Transverse colon (tissue), 4 donors: ENCODE measurements at regions of chr19 and their contacts with region 1.

Region 1: DNA sequence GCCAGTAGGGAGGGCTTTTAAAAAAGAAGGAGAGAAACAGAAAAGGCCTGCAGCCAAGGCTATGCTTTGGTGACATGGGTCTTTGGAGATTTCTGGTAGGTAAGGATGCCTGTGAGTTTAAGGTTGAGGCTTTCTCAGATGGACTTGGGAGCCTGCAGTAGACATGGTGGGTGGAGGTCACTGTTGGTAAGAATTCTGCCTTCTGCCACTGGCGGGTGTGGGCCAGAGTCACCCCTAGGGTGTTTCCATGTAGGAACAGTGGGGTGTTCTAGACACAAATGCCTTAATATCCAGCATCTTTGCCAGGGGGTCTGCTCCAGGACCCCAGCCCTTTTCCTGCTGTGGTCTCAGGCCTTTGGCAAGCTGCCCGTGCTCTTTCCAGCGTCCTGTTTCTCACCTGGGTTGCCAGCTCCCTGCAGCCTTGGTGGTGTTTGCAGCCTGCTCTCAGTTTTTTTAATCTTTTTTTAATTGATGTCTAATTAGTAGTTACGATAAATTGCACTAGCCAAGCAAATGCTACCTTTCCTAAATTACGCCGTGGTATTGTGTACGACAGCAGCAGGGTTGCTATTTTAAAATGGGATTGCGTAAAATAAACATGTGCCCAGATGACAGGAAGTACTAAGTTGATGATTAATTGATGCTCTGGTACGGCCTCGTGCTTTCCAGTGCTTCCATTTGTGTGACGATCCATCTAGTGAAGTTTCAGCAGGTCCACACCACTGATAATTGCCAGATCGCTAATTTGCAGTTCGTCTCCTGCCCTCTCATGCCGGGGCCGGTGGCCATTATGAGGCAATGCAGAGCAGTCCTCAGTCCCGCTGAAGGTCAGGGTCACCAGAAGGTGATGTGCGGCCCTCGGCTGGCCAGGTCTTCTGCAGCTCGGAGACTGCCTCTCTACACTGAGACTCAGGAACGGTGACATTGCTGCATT is 35.3 kb upstream of the NPAS1 start:
- DNase-seq: no peak
- H3K4me3 ChIP-seq: no peak overlapping the region
- H3K27ac ChIP-seq: peak overlapping the region in 1 of 4 donors; percentile 0
- H3K4me1 ChIP-seq: peaks cover 3 to 37% (median 22%) of the 10 kb centered on the region in 4 donors
- H3K27me3 ChIP-seq: no peaks in the 10 kb centered on the region
- CTCF ChIP-seq: no peak
- EP300 ChIP-seq: peak; percentile 76
- POLR2A ChIP-seq: no peak

Region 2: GRCh38 chr19:46850228-46851203 is 133.8 kb before region 1 on chr19 and contains the start of gene AP2S1:
- in situ Hi-C with region 1: loop called in 1 of 4 experiments (anchors 10 kb)
- intact Hi-C with region 1: no loop called
- DNase-seq: peak; percentile 97
- H3K4me3 ChIP-seq: peak within 1 kb of the TSS; percentile 67 to 86 (median 83)
- H3K27ac ChIP-seq: peak within 1 kb of the TSS; percentile 88 to 94 (median 90)
- H3K4me1 ChIP-seq: peaks cover 12 to 46% (median 19%) of the 10 kb centered on the region in 4 donors
- H3K27me3 ChIP-seq: no peaks in the 10 kb centered on the region
- CTCF ChIP-seq: no peak
- EP300 ChIP-seq: no peak
- POLR2A ChIP-seq: peak; percentile 85
- total RNA-seq, gene AP2S1: 50.1 to 96.9 (median 61.2) TPM